ENCODE measurements at regions of chr15 and their contacts with region 1.

Region 1: DNA sequence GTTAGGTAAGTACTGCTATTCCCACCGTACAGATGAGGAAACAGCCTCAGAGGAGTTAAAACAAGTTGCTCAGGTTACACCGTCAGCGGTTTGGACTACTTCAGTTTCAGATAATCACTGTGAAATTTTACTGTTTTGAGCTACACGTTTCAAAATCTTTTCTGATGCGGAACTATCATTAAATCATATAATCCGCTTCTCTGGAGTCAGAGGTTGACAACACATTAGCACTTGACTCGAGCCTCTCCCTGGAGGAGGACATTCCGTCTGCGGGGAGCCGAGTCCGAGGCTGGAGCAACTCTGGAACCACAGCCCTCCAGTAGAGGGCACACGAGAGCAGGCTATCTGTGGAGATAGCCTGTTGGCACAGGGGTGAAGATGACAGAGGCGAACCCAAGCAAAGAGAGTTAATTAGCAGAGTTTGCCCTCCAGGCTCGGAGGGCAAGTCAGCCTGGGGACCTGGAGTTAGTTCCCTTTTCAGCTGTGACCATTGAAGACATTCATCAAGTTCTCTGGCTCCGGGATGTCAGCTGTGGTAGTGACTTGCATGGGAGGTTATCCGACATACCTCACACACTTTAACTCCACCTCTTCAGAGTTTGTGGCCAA is 131.2 kb downstream of the IGF1R start:
- DNase-seq: peak; percentile 77
- H3K4me3 ChIP-seq: no peak overlapping the region
- H3K27ac ChIP-seq: no peak overlapping the region
- H3K4me1 ChIP-seq: peaks cover 5% of the 10 kb centered on the region
- H3K27me3 ChIP-seq: no peaks in the 10 kb centered on the region
- CTCF ChIP-seq: peak; percentile 93 to 95
- POLR2A ChIP-seq: no peak

Region 2: GRCh38 chr15:98668566-98669308 is 110.8 kb before region 1 on chr15:
- CTCF ChIA-PET with region 1: interaction called, 7 read pairs
- POLR2A ChIA-PET with region 1: no interaction called
- dilution Hi-C with region 1: no loop called
- intact Hi-C with region 1: loop called (anchors 5 kb)
- DNase-seq: peak; percentile 75
- H3K4me3 ChIP-seq: peak overlapping the region in 1 of 3 experiments; percentile 5
- H3K27ac ChIP-seq: peak overlapping the region; percentile 64
- H3K4me1 ChIP-seq: peaks cover 49% of the 10 kb centered on the region
- H3K27me3 ChIP-seq: no peaks in the 10 kb centered on the region
- CTCF ChIP-seq: no peak
- POLR2A ChIP-seq: no peak

Region 3: DNA sequence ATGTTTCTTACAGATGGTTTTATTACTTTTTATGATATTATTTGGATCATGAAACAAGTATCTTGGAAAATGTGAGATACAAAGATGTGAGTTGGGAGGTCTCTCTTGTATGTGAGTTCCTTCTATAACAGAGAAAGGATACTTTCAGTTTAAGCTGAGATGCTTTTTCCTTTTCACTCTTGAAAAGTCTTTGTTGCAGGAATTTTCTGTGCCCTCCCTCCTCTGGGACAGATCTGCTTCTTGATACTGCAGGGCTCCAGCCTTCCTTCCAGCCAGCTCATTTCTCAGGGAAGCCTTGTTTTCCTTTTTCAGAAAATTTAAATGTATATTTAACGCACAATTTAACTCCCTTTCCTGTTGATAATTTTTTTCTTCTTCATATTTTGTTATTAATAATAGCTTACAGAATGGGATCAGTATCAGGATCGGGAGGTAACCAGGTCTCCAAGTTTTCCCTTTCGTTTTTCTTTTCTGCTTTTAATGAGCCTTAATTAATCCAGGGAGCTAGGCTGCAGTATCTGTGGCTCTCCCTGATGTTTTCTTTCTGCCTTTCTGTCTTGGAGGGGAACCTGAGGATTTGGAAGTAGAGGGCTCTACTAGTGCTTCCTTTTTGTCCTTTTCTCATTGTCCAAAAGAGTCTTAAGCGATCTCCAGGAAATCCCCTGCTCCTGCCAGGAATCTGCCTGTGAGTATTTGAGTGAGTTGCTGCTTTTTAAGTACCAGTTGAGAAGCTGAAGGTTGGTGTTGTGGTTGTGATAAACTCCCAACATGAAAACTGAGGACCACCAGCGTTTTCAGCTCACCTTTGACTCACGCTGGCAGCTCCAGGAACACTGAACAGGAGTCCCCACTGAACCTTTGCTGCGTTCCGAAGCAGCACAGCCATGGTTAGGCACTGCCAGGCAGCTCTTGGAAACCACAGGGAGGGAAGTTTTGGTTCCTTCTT is 25.6 kb before region 1 on chr15:
- CTCF ChIA-PET with region 1: interaction called, 10 read pairs
- POLR2A ChIA-PET with region 1: no interaction called
- dilution Hi-C with region 1: no loop called
- intact Hi-C with region 1: no loop called
- DNase-seq: peak; percentile 73
- H3K4me3 ChIP-seq: peak overlapping the region; percentile 25 to 60 (median 34)
- H3K27ac ChIP-seq: peak overlapping the region; percentile 30
- H3K4me1 ChIP-seq: peaks cover 12% of the 10 kb centered on the region
- H3K27me3 ChIP-seq: no peaks in the 10 kb centered on the region
- CTCF ChIP-seq: no peak
- POLR2A ChIP-seq: no peak

Region 4: DNA sequence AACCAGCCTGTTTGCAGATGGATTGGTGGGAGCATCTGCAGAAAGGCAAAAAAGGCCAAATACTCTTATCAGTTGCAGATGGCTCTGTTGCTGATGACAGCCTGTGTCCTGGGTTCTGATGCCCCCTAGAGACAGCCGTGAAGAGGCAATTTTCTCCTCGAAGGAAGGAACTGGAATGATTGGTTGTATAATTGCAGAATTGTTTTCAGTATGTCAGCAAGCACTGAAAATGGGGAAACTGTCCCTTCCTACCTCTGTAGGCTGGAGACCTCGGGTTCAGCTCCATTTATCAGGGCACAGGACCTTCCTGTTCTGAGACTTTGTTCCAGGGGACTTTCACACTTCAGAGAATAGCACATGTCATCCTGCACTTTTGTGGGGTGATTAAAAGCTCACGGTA is 125.0 kb after region 1 on chr15:
- CTCF ChIA-PET with region 1: interaction called, 4 read pairs
- POLR2A ChIA-PET with region 1: no interaction called
- dilution Hi-C with region 1: no loop called
- intact Hi-C with region 1: loop called (anchors 1 kb)
- DNase-seq: peak; percentile 53
- H3K4me3 ChIP-seq: no peak overlapping the region
- H3K27ac ChIP-seq: peak overlapping the region; percentile 15
- H3K4me1 ChIP-seq: peaks cover 42% of the 10 kb centered on the region
- H3K27me3 ChIP-seq: no peaks in the 10 kb centered on the region
- CTCF ChIP-seq: peak; percentile 52 to 58
- POLR2A ChIP-seq: no peak

Region 5: DNA sequence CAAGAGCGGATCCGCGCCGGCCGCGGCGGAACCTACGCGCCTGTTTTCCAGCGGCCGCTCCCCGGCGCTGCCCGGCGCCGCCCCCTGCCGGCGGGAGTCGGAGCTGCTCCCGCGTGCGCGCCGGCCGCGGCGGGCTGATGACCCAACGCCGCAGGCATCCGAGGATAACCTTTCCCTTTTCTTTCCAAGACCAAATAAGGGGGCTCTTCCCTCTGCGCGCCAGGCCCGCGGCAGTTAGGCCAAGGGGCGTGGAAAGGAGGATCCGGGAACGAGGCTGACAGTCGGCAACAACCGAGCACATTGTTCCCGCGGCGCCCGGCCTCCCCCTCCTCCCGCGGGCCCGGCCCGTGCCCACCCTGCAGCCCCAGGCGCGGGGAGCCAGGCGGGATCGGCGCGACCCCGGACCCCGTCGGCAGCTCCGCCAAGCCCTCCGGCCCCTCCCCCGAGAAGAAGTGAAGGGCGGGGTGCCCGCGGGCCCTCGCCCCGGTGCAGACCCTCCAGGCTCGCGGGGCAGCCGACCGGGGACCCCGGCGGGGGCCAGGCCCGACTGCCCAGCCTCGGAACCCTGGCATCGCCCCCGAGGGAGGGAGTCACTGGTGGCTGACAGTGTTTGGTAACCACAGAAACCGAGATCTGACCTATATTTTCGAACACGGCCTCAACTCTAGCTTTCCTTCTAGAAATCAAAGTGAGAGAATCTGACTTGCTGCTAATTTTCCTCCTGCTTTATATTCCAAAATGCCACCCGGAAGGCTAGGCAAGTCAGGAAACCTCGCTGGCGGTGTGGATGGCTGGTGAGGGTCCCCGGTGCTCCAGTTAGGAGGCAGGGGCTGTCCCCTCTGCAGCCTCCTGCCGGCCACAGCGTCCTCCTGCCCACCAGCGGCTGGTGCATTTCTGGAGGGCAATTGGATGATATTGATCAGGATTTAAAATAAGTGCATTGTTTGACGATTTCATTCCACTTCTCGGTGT is 279.7 kb after region 1 on chr15:
- CTCF ChIA-PET with region 1: interaction called, 5 read pairs
- POLR2A ChIA-PET with region 1: no interaction called
- dilution Hi-C with region 1: no loop called
- intact Hi-C with region 1: loop called (anchors 1 kb)
- DNase-seq: peak; percentile 61
- H3K4me3 ChIP-seq: peak overlapping the region; percentile 34 to 60 (median 40)
- H3K27ac ChIP-seq: peak overlapping the region; percentile 12
- H3K4me1 ChIP-seq: peaks cover 8% of the 10 kb centered on the region
- H3K27me3 ChIP-seq: peaks cover 0 to 5% of the 10 kb centered on the region in 2 experiments
- CTCF ChIP-seq: peak; percentile 56 to 85
- POLR2A ChIP-seq: no peak